GM18951 (cell line): ENCODE measurements at regions of chr20 and their contacts with region 1.

Region 1: GRCh38 chr20:35207950-35208611 is 18.4 kb upstream of the MMP24 start:
- POLR2A ChIP-seq: no peak

Region 2: DNA sequence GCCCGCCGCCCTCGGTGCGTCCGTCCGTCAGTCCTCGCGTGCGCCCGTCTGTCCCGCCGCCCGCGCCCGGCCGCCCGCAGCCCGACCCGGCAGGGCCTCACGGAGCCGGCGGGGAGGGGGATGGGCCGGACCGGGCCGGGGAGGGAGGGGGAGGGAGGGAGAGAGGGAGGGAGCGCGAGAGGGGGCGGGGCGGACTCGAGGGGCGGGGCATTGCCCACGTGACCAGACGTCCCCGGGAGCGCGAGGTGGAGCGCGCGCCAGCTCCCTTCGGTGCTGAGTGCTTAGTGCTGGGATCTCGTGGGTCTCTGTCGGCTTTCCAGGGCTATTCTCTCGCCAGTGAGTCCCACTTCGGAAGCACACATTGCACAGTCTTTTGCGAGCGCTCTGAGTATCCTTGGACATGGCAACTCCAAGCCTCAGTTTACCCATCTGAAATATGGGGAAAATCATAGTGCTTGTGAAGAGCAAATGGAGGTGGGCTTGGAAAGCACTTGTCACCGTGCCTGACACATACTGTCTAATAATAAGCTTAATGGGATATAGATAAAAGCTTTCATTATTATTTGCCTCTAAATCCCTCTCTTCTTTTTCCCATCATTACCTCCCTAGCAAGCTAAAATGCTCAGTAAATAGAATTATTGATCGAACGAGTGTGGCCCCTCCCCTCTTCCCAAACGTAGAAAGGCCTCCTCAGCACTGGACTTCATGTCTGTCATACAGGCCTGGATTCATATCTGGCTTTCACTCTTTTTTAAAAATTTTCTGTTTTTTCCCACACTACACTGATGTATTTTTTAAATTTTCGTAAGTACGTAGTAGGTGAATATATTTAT is 382.3 kb before region 1 on chr20 and contains the start of gene NCOA6:
- in situ Hi-C with region 1: loop called (anchors 25 kb)
- POLR2A ChIP-seq: peak; percentile 64

Region 3: GRCh38 chr20:35883778-35884540 is 675.9 kb after region 1 on chr20:
- in situ Hi-C with region 1: no loop called
- POLR2A ChIP-seq: no peak